Activated CD4-positive, alpha-beta T cell treated with anti-CD3 and anti-CD28 coated beads for 36 hours (primary cell): ENCODE measurements at regions of chr5 and their contacts with region 1.

Region 1: DNA sequence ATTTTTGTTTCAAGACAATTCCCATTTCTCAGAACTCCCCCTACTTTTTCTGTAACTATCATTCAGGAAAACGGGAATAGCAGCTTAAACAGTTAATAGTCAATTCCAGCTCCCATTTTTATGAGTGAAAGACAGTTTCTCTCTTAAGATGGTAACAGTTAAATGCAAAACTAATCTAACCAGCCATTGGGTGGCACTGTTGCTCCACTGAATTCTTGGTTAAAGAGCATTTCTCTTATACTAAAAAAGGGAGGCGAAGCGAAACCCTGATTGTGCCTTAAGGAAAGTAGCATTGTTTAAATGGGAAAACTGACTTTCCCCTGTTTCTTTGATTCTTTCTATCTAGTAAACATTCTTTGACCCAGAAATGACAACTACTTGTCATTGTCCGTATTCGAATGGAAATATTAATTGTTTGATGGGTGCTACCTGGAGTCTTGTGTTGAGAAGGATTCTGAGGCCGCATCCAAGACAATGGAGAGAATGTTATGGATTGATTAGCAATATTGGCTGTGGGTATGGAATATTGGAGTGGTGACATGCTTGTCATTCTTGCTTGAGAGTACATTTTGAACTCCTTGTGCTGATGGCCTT is 507.8 kb downstream of the MAT2B start:
- DNase-seq: peak; percentile 50
- ATAC-seq: no peak
- H3K4me3 Mint-ChIP-seq: no peak overlapping the region
- H3K27ac Mint-ChIP-seq: no peak overlapping the region
- H3K4me1 Mint-ChIP-seq: no peaks in the 10 kb centered on the region
- H3K27me3 Mint-ChIP-seq: no peaks in the 10 kb centered on the region

Region 2: GRCh38 chr5:164504141-164504772 is 491.1 kb after region 1 on chr5:
- CTCF ChIA-PET with region 1: no interaction called
- POLR2A ChIA-PET with region 1: no interaction called
- intact Hi-C with region 1: loop called (anchors 1 to 2 kb)
- DNase-seq: peak; percentile 34
- ATAC-seq: no peak
- H3K4me3 Mint-ChIP-seq: no peak overlapping the region
- H3K27ac Mint-ChIP-seq: no peak overlapping the region
- H3K4me1 Mint-ChIP-seq: no peaks in the 10 kb centered on the region
- H3K27me3 Mint-ChIP-seq: no peaks in the 10 kb centered on the region

Region 3: DNA sequence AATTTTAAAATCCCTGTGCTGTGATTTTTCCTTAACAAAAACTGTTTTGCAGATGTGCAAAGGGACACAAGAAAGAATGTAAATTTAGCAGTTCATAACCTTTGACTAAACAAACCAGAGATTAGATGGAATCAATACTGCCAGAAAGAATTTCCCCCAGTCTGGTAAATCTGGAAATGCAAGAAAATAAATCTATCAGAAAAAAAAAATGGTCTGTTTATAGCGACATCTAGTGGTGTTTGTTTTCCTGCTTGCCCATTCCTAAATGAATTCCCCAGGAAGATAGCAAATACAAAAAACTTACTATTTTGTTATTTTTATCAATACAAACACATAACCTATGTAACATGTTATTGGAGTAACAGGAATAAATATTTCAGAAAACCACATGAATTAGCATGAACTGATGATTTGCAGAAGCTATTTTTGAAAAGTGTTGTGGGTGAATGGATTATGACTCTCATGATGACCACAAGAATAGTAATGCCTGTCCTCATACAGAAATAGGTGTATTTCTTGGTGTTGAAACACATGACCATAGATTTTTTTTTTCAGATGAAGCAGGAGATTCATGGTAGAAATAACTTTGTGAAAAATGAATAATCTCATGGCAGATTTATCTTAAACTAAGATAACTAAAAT is 1196.0 kb after region 1 on chr5:
- CTCF ChIA-PET with region 1: no interaction called
- POLR2A ChIA-PET with region 1: no interaction called
- intact Hi-C with region 1: loop called in 1 of 2 experiments (anchors 1 kb)
- DNase-seq: no peak
- ATAC-seq: no peak
- H3K4me3 Mint-ChIP-seq: no peak overlapping the region
- H3K27ac Mint-ChIP-seq: no peak overlapping the region
- H3K4me1 Mint-ChIP-seq: no peaks in the 10 kb centered on the region
- H3K27me3 Mint-ChIP-seq: no peaks in the 10 kb centered on the region

Region 4: DNA sequence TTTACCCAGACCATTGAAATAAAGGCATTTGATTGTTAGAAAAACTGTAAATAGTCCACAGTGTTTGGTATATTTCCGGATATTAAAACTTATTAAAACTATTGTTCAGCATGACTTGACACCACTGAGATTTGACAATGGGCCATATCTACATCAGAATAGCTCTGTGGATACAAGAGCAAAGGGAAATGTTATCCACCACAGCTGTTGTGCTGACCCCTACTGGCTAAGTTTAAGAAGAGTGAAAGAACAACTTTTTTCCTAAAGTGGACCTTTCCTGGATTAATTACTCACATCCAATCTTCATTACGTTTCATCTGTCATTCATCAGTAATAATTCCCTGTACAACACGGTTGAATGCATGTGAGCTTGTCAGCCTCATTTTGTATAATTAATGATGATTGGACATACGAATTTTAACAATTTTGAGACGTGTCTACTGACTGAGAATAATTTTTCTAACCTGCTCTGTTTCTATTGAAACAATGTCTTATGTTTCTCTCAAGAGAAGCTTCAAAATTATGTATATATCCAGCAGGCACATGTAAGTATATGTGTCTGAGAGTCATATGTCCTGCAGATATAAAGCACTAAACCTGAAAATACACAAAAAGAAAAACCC is 1444.8 kb after region 1 on chr5:
- CTCF ChIA-PET with region 1: no interaction called
- POLR2A ChIA-PET with region 1: no interaction called
- intact Hi-C with region 1: loop called in 1 of 2 experiments (anchors 5 kb)
- DNase-seq: no peak
- ATAC-seq: no peak
- H3K4me3 Mint-ChIP-seq: no peak overlapping the region
- H3K27ac Mint-ChIP-seq: no peak overlapping the region
- H3K4me1 Mint-ChIP-seq: no peaks in the 10 kb centered on the region
- H3K27me3 Mint-ChIP-seq: no peaks in the 10 kb centered on the region